IMR-90 (cell line): ENCODE measurements at regions of chr11 and their contacts with region 1.

Region 1: GRCh38 chr11:49505231-49505630 is 296.8 kb upstream of the FOLH1 start:
- DNase-seq: no peak
- ATAC-seq: no peak
- H3K4me3 ChIP-seq: no peak overlapping the region
- H3K27ac ChIP-seq: no peak overlapping the region
- H3K4me1 ChIP-seq: no peaks in the 10 kb centered on the region
- H3K27me3 ChIP-seq: no peaks in the 10 kb centered on the region
- CTCF ChIP-seq: no peak
- POLR2A ChIP-seq: no peak
- RAD21 ChIP-seq: no peak

Region 2: GRCh38 chr11:49442669-49443068 is 62.6 kb before region 1 on chr11:
- CTCF ChIA-PET with region 1: no interaction called
- POLR2A ChIA-PET with region 1: no interaction called
- dilution Hi-C with region 1: no loop called
- in situ Hi-C with region 1: no loop called
- intact Hi-C with region 1: loop called (anchors 10 kb)
- DNase-seq: no peak
- ATAC-seq: no peak
- H3K4me3 ChIP-seq: no peak overlapping the region
- H3K27ac ChIP-seq: no peak overlapping the region
- H3K4me1 ChIP-seq: no peaks in the 10 kb centered on the region
- H3K27me3 ChIP-seq: no peaks in the 10 kb centered on the region
- CTCF ChIP-seq: no peak
- POLR2A ChIP-seq: no peak
- RAD21 ChIP-seq: no peak

Region 3: GRCh38 chr11:50187220-50187619 is 682.0 kb after region 1 on chr11:
- CTCF ChIA-PET with region 1: no interaction called
- POLR2A ChIA-PET with region 1: no interaction called
- dilution Hi-C with region 1: no loop called
- in situ Hi-C with region 1: no loop called
- intact Hi-C with region 1: no loop called
- DNase-seq: no peak
- ATAC-seq: no peak
- H3K4me3 ChIP-seq: no peak overlapping the region
- H3K27ac ChIP-seq: no peak overlapping the region
- H3K4me1 ChIP-seq: no peaks in the 10 kb centered on the region
- H3K27me3 ChIP-seq: no peaks in the 10 kb centered on the region
- CTCF ChIP-seq: no peak
- POLR2A ChIP-seq: no peak
- RAD21 ChIP-seq: no peak